ENCODE measurements at regions of chr12 and their contacts with region 1.

Region 1: DNA sequence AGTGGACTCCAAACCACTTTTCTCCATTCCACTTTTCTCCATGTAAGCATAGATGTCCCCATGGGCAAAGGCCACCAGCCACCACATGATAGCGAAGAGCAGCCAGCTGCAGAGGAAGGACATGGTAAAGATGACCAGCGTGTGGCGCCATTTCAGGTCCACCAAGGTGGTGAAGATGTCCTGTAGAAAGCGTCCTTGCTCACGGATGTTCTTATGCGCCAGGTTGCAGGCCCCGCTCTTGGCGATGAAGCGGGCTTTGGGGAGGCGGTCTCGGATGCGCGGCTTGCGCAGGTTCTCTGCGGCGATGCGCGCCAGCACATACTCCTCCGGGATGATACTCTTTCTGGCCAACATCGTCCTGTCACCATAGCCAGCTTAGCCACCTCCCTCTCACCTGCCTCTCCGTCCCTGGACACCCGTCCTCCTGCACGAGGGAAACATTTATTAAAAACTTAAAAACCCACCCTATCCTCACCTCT is 1.2 kb downstream of the KCNJ8 start:
- DNase-seq: peak; percentile 88 to 89
- H3K4me3 ChIP-seq: peak overlapping the region; percentile 88
- H3K4me3 Mint-ChIP-seq: peak overlapping the region; percentile 76
- H3K27ac Mint-ChIP-seq: peak overlapping the region; percentile 41
- H3K4me1 ChIP-seq: peaks cover 35% of the 10 kb centered on the region
- H3K4me1 Mint-ChIP-seq: peaks cover 51% of the 10 kb centered on the region
- H3K27me3 ChIP-seq: no peaks in the 10 kb centered on the region
- H3K27me3 Mint-ChIP-seq: no peaks in the 10 kb centered on the region
- CTCF ChIP-seq: peak; percentile 76 to 87

Region 2: DNA sequence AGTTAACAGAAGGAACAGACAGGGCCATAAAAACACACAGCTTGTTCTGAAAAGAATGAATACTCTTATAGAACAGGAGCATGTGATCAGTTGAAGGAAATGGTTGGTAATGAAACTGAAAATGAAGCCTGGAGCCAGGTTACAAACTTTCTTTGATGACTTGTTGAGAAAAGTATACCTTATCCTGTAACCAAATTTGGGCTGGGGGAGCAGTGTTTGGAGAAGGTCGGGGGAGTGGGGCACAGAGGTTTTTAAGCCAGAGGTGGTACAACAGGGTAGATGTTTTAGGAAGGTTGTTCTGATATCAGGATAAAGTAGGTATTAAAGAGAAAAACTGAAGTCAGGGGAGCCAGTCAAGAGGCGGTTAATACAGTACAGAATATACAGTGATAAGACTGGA is 263.5 kb before region 1 on chr12:
- CTCF ChIA-PET with region 1: no interaction called
- POLR2A ChIA-PET with region 1: interaction called, 27 read pairs
- intact Hi-C with region 1: no loop called
- DNase-seq: no peak
- H3K4me3 ChIP-seq: no peak overlapping the region
- H3K4me3 Mint-ChIP-seq: no peak overlapping the region
- H3K27ac Mint-ChIP-seq: no peak overlapping the region
- H3K4me1 ChIP-seq: no peaks in the 10 kb centered on the region
- H3K4me1 Mint-ChIP-seq: no peaks in the 10 kb centered on the region
- H3K27me3 ChIP-seq: no peaks in the 10 kb centered on the region
- H3K27me3 Mint-ChIP-seq: no peaks in the 10 kb centered on the region
- CTCF ChIP-seq: no peak

Region 3: DNA sequence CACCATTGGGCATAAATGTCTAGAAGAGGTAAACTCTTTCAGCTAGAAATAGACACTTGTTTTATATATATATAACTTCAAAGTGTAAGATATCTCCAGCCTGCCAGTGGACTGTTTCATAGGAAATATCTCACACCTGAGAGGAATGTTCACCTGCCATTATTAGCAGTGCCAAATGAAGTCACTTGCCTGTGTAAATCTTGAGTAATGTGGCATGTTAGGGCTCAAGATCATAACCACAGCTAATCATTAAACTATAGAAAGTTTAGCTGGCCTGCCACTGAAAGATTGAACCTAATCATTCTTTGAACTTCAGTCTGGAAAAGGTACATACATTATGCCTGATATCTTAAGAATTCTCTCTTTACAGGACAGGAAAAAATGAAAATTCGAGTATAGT is 26.7 kb after region 1 on chr12:
- CTCF ChIA-PET with region 1: no interaction called
- POLR2A ChIA-PET with region 1: interaction called, 7 read pairs
- intact Hi-C with region 1: loop called (anchors 2 kb)
- DNase-seq: peak in 1 of 2 experiments; percentile 47
- H3K4me3 ChIP-seq: no peak overlapping the region
- H3K4me3 Mint-ChIP-seq: no peak overlapping the region
- H3K27ac Mint-ChIP-seq: peak overlapping the region; percentile 29
- H3K4me1 ChIP-seq: peaks cover 34% of the 10 kb centered on the region
- H3K4me1 Mint-ChIP-seq: peaks cover 7% of the 10 kb centered on the region
- H3K27me3 ChIP-seq: no peaks in the 10 kb centered on the region
- H3K27me3 Mint-ChIP-seq: no peaks in the 10 kb centered on the region
- CTCF ChIP-seq: no peak

Region 4: GRCh38 chr12:21891751-21892217 is 118.5 kb after region 1 on chr12:
- CTCF ChIA-PET with region 1: no interaction called
- POLR2A ChIA-PET with region 1: interaction called, 3 read pairs
- intact Hi-C with region 1: loop called (anchors 5 kb)
- DNase-seq: no peak
- H3K4me3 ChIP-seq: no peak overlapping the region
- H3K4me3 Mint-ChIP-seq: no peak overlapping the region
- H3K27ac Mint-ChIP-seq: no peak overlapping the region
- H3K4me1 ChIP-seq: no peaks in the 10 kb centered on the region
- H3K4me1 Mint-ChIP-seq: no peaks in the 10 kb centered on the region
- H3K27me3 ChIP-seq: no peaks in the 10 kb centered on the region
- H3K27me3 Mint-ChIP-seq: no peaks in the 10 kb centered on the region
- CTCF ChIP-seq: no peak

Region 5: GRCh38 chr12:21989819-21990412 is 216.6 kb after region 1 on chr12:
- CTCF ChIA-PET with region 1: interaction called, 17 read pairs
- POLR2A ChIA-PET with region 1: no interaction called
- intact Hi-C with region 1: loop called (anchors 1 kb)
- DNase-seq: peak in 1 of 2 experiments; percentile 46
- H3K4me3 ChIP-seq: no peak overlapping the region
- H3K4me3 Mint-ChIP-seq: no peak overlapping the region
- H3K27ac Mint-ChIP-seq: no peak overlapping the region
- H3K4me1 ChIP-seq: peaks cover 24% of the 10 kb centered on the region
- H3K4me1 Mint-ChIP-seq: peaks cover 35% of the 10 kb centered on the region
- H3K27me3 ChIP-seq: no peaks in the 10 kb centered on the region
- H3K27me3 Mint-ChIP-seq: no peaks in the 10 kb centered on the region
- CTCF ChIP-seq: peak; percentile 83 to 85